H1 (cell line): ENCODE measurements at regions of chr22 and their contacts with region 1.

Region 1: DNA sequence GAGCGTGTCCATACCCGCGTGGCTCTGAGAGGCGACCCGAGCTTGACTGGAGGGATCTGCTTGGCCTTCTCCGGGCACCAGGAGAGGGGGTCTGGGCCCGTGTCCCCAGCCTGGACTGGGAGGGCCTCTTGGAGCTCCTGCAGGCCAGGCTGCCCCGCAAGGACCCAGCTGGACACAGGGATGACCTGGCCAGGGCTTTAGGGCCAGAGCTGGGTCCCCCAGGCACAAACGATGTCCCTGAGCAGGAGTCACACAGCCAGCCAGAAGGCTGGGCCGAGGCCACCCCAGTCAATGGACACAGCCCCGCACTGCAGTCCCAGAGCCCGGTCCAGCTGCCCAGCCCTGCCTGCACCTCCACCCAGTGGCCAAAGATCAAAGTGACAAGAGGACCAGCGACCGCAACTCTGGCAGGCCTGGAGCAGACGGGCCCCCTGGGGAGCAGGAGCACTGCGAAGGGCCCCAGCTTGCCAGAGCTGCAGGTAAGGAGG is 38.2 kb downstream of the TRIOBP start:
- DNase-seq: peak in 1 of 2 experiments; percentile 73
- H3K4me3 ChIP-seq: no peak overlapping the region
- H3K27ac ChIP-seq: no peak overlapping the region
- H3K4me1 ChIP-seq: no peaks in the 10 kb centered on the region
- H3K27me3 ChIP-seq: peaks cover 2 to 49% (median 39%) of the 10 kb centered on the region in 4 experiments
- CTCF ChIP-seq: peak; percentile 47 to 62 (median 56)
- EP300 ChIP-seq: no peak
- POLR2A ChIP-seq: no peak
- RAD21 ChIP-seq: peak; percentile 34 to 66; a peak in 3 of 4 replicates

Region 2: GRCh38 chr22:37676736-37677492 is 58.1 kb before region 1 on chr22:
- CTCF ChIA-PET with region 1: no interaction called
- POLR2A ChIA-PET with region 1: no interaction called
- DNase-seq: peak; percentile 78 to 87
- H3K4me3 ChIP-seq: peak overlapping the region; percentile 28 to 63 (median 36)
- H3K27ac ChIP-seq: no peak overlapping the region
- H3K4me1 ChIP-seq: peaks cover 0 to 19% (median 13%) of the 10 kb centered on the region in 4 experiments; a peak in 6 of 7 replicates
- H3K27me3 ChIP-seq: peaks cover 0 to 2% (median 0%) of the 10 kb centered on the region in 4 experiments; a peak in 1 of 7 replicates
- CTCF ChIP-seq: no peak
- EP300 ChIP-seq: 0 out of 3 replicates have a peak, but pooled peaks of 1 of the 2 experiments have one; percentile 27
- POLR2A ChIP-seq: peak in 1 of 2 experiments; percentile 26; a peak in 1 of 3 replicates
- RAD21 ChIP-seq: no peak

Region 3: DNA sequence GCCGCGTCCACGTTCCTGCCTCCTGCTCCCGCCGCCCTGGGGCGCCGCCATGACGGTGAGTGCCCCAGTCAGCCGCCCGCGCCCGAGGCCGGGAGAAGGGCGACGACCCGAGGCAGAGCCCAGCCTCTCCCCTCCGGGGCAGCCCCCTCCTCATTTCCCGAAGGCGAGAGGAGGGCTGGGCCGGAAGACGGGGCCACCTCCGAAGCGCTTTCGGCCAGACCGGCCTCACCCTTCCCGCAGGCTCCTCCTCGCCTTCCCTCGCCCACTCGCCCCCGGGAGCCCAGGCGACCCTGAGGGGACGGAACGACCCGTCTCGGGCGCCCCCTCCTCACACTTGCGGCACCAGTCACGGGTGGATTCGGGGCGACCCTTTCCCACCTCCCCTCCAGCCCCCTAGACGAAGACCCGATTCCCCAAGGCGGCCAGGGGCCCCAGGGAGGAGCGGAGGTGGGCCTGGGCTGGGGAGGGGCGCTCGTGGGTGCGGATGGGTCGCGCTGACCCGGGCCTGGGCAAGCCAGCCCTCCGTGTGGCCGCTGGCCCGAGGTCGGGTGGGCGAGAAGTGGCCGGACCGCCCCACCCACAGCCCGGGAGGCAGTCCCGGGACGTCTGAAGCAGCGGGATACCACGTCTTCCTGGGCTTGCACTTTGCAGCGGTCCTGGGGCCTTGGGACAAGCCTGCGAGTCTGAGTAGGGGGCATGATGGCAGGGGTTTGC is 11.5 kb after region 1 on chr22:
- CTCF ChIA-PET with region 1: interaction called, 12 read pairs
- POLR2A ChIA-PET with region 1: interaction called, 24 read pairs
- DNase-seq: peak in 1 of 2 experiments; percentile 71
- H3K4me3 ChIP-seq: peak overlapping the region; percentile 72 to 93 (median 72)
- H3K27ac ChIP-seq: peak overlapping the region; percentile 77
- H3K4me1 ChIP-seq: peaks cover 0 to 18% (median 9%) of the 10 kb centered on the region in 4 experiments; a peak in 6 of 7 replicates
- H3K27me3 ChIP-seq: peaks cover 0 to 21% (median 11%) of the 10 kb centered on the region in 4 experiments; a peak in 5 of 7 replicates
- CTCF ChIP-seq: no peak
- EP300 ChIP-seq: no peak
- POLR2A ChIP-seq: no peak; a peak in 1 of 3 replicates
- RAD21 ChIP-seq: no peak

Region 4: GRCh38 chr22:38273135-38273826 is 538.3 kb after region 1 on chr22:
- CTCF ChIA-PET with region 1: no interaction called
- POLR2A ChIA-PET with region 1: no interaction called
- DNase-seq: no peak
- H3K4me3 ChIP-seq: peak overlapping the region; percentile 30 to 97 (median 74)
- H3K27ac ChIP-seq: no peak overlapping the region
- H3K4me1 ChIP-seq: peaks cover 10 to 21% (median 15%) of the 10 kb centered on the region in 4 experiments
- H3K27me3 ChIP-seq: no peaks in the 10 kb centered on the region
- CTCF ChIP-seq: no peak; a peak in 1 of 4 replicates
- EP300 ChIP-seq: no peak
- POLR2A ChIP-seq: no peak
- RAD21 ChIP-seq: no peak